ENCODE measurements at regions of chr2 and their contacts with region 1.

Region 1: GRCh38 chr2:228699400-228699799 is 517.9 kb upstream of the SPHKAP start:
- DNase-seq: no peak
- ATAC-seq: peak; percentile 59 to 65

Region 2: DNA sequence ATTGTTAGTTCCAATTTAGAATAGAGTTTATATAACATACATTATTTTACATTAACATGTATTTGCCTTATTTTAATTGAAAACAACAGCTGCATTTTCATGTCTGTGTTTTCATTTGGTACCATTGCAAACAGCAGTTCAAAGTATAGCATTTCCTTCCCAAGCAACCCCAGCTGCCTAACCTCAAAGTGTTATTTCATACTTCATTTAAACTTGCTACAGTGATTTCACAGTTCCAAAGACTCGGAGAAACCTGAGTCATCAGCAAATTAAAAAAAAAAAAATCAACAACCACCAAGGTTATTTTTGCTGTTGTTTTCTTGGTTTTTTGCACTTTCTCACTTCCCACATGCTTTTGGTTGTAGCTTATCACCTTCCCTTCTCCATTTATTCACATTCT is 281.4 kb before region 1 on chr2:
- intact Hi-C with region 1: no loop called
- DNase-seq: no peak
- ATAC-seq: no peak

Region 3: GRCh38 chr2:229133155-229133772 is 433.9 kb after region 1 on chr2:
- intact Hi-C with region 1: loop called in 1 of 2 experiments (anchors 10 kb)
- DNase-seq: no peak
- ATAC-seq: peak; percentile 44 to 66